ENCODE measurements at regions of chr11 and their contacts with region 1.

Region 1: DNA sequence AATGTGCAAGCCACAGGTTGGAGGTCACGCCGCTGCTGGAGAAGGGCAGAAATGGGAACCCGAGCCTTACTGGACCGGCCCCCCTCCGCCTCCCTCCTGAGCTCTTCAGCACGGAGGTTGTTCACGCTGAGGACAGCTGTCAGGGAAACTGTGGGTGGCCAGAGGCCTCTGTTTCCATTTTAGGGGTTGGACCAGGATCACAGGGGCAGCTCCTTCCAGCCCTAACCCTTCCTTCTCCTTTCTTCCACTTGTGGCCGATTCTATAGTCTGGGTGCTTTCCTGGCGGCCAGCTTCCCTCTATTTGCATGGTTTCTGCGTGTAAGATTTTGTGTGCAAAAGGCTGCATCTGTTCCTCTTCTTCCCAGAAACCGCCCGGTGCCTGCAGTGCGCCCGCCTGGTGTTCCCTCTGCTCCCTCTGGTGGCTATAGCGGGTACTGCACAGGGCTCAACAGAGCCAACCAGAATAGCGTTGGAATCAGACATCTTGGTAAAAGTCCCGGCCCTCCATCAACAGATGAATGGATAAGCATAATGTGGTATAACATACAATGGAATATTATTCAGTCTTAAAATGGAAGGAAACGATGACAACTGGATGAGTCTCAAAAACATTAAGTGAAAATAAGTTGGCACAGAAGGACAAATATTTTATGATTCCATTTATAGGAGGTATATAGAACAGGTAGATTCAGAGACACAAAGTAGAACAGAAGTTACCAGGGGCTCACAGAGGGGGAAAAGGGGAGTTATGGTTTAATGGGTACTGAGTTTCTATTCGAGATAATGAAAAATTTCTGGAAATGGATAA is 8.4 kb upstream of the SLC22A8 start:
- DNase-seq: peak; percentile 82
- H3K4me3 ChIP-seq: peak overlapping the region in 1 of 2 experiments; percentile 49; a peak in 1 of 4 replicates
- H3K27ac ChIP-seq: no peak overlapping the region
- H3K4me1 ChIP-seq: peaks cover 0 to 9% of the 10 kb centered on the region in 2 experiments; a peak in 1 of 4 replicates
- H3K27me3 ChIP-seq: no peaks in the 10 kb centered on the region
- CTCF ChIP-seq: peak; percentile 99
- EP300 ChIP-seq: no peak
- RAD21 ChIP-seq: peak; percentile 98

Region 2: DNA sequence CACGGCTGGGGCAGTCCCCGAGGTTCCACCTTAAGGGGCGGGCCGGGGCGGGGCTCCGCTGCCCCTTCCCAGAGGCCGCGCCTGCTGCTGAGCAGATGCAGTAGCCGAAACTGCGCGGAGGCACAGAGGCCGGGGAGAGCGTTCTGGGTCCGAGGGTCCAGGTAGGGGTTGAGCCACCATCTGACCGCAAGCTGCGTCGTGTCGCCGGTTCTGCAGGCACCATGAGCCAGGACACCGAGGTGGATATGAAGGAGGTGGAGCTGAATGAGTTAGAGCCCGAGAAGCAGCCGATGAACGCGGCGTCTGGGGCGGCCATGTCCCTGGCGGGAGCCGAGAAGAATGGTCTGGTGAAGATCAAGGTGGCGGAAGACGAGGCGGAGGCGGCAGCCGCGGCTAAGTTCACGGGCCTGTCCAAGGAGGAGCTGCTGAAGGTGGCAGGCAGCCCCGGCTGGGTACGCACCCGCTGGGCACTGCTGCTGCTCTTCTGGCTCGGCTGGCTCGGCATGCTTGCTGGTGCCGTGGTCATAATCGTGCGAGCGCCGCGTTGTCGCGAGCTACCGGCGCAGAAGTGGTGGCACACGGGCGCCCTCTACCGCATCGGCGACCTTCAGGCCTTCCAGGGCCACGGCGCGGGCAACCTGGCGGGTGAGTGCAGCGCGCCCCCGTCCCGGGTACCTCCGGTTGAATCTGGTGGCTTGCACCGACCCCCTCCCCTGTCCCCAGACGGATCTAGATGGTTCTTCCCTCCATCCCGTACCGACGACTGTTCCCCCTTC is 143.1 kb before region 1 on chr11 and contains the start of gene SLC3A2:
- CTCF ChIA-PET with region 1: interaction called, 21 read pairs
- POLR2A ChIA-PET with region 1: no interaction called
- DNase-seq: peak; percentile 89
- H3K4me3 ChIP-seq: peak within 1 kb of the TSS; percentile 82 to 91
- H3K27ac ChIP-seq: peak within 1 kb of the TSS; percentile 94 to 98
- H3K4me1 ChIP-seq: peaks cover 32 to 44% of the 10 kb centered on the region in 2 experiments
- H3K27me3 ChIP-seq: no peaks in the 10 kb centered on the region
- CTCF ChIP-seq: peak; percentile 67
- EP300 ChIP-seq: no peak
- RAD21 ChIP-seq: peak; percentile 57
- polyA plus RNA-seq, gene SLC3A2: 212 and 308 TPM in 2 replicates

Region 3: GRCh38 chr11:62896049-62896448 is 128.0 kb before region 1 on chr11:
- CTCF ChIA-PET with region 1: interaction called, 751 read pairs
- POLR2A ChIA-PET with region 1: no interaction called
- DNase-seq: no peak
- H3K4me3 ChIP-seq: no peak overlapping the region
- H3K27ac ChIP-seq: no peak overlapping the region
- H3K4me1 ChIP-seq: no peaks in the 10 kb centered on the region; a peak in 1 of 4 replicates
- H3K27me3 ChIP-seq: 0 out of 2 replicates have a peak, but pooled peaks cover 5% of the 10 kb centered on the region
- CTCF ChIP-seq: no peak
- EP300 ChIP-seq: no peak
- RAD21 ChIP-seq: no peak

Region 4: DNA sequence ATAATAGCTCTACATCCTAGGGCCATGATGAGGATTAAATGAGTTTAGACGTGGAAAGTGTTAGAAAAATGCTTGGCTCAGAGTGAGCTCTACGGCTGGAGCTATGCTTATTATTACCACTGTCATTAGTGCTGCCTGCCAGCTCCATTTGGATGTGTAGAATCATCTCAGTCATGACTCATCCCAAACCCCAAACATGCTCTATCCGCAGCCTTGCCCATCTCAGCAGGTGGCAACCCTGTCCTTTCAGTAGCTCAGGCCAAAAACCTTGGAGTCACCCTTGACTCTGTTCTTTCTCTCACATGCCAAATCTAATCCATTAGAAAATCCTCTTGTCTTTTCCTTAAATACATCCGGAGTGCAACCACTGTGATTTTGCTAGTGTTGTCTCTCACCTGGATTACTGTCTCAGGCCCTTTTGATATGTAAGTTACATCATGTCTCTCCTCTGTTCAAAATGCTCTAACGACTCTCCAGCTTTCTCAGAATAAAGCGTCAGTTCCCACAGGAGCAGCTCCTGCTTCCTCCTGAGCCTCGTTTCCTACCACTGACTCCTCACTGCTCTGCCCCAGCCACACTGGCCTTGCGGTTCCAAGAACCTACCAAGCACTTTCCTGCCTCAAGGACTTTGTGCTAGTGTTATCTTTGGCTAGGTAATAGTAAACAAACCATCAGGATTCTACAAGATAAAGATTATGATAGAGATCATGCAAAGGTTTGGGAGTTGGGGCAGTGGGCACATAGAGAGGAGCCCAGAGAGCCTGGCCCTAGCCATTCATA is 92.4 kb before region 1 on chr11:
- CTCF ChIA-PET with region 1: interaction called, 21 read pairs
- POLR2A ChIA-PET with region 1: no interaction called
- DNase-seq: no peak
- H3K4me3 ChIP-seq: no peak overlapping the region
- H3K27ac ChIP-seq: no peak overlapping the region
- H3K4me1 ChIP-seq: peaks cover 0 to 28% of the 10 kb centered on the region in 2 experiments; a peak in 1 of 4 replicates
- H3K27me3 ChIP-seq: no peaks in the 10 kb centered on the region
- CTCF ChIP-seq: no peak
- EP300 ChIP-seq: no peak
- RAD21 ChIP-seq: no peak

Region 5: GRCh38 chr11:62974848-62975522 is 49.1 kb before region 1 on chr11:
- CTCF ChIA-PET with region 1: interaction called, 107 read pairs
- POLR2A ChIA-PET with region 1: no interaction called
- DNase-seq: peak; percentile 80
- H3K4me3 ChIP-seq: no peak overlapping the region
- H3K27ac ChIP-seq: no peak overlapping the region
- H3K4me1 ChIP-seq: peaks cover 0 to 10% of the 10 kb centered on the region in 2 experiments; a peak in 1 of 4 replicates
- H3K27me3 ChIP-seq: no peaks in the 10 kb centered on the region
- CTCF ChIP-seq: peak; percentile 31; the same call in 1 of the 2 replicates
- EP300 ChIP-seq: no peak
- RAD21 ChIP-seq: peak; percentile 58

Region 6: GRCh38 chr11:62999649-63000048 is 24.4 kb before region 1 on chr11:
- CTCF ChIA-PET with region 1: interaction called, 13 read pairs
- POLR2A ChIA-PET with region 1: no interaction called
- DNase-seq: no peak
- H3K4me3 ChIP-seq: no peak overlapping the region
- H3K27ac ChIP-seq: no peak overlapping the region
- H3K4me1 ChIP-seq: no peaks in the 10 kb centered on the region
- H3K27me3 ChIP-seq: no peaks in the 10 kb centered on the region; the same call in 1 of the 2 replicates
- CTCF ChIP-seq: no peak
- EP300 ChIP-seq: no peak
- RAD21 ChIP-seq: no peak

Region 7: GRCh38 chr11:63007920-63008319 is 16.1 kb before region 1 on chr11:
- CTCF ChIA-PET with region 1: interaction called, 46 read pairs
- POLR2A ChIA-PET with region 1: no interaction called
- DNase-seq: no peak
- H3K4me3 ChIP-seq: no peak overlapping the region
- H3K27ac ChIP-seq: no peak overlapping the region
- H3K4me1 ChIP-seq: no peaks in the 10 kb centered on the region; a peak in 1 of 4 replicates
- H3K27me3 ChIP-seq: no peaks in the 10 kb centered on the region
- CTCF ChIP-seq: no peak
- EP300 ChIP-seq: no peak
- RAD21 ChIP-seq: no peak

Region 8: GRCh38 chr11:63179432-63180041 is 155.5 kb after region 1 on chr11:
- CTCF ChIA-PET with region 1: no interaction called
- POLR2A ChIA-PET with region 1: no interaction called
- DNase-seq: no peak
- H3K4me3 ChIP-seq: no peak overlapping the region
- H3K27ac ChIP-seq: no peak overlapping the region
- H3K4me1 ChIP-seq: peaks cover 0 to 11% of the 10 kb centered on the region in 2 experiments; a peak in 1 of 4 replicates
- H3K27me3 ChIP-seq: no peaks in the 10 kb centered on the region
- CTCF ChIP-seq: no peak
- EP300 ChIP-seq: no peak
- RAD21 ChIP-seq: no peak